ENCODE measurements at regions of chr20 and their contacts with region 1.

Region 1: DNA sequence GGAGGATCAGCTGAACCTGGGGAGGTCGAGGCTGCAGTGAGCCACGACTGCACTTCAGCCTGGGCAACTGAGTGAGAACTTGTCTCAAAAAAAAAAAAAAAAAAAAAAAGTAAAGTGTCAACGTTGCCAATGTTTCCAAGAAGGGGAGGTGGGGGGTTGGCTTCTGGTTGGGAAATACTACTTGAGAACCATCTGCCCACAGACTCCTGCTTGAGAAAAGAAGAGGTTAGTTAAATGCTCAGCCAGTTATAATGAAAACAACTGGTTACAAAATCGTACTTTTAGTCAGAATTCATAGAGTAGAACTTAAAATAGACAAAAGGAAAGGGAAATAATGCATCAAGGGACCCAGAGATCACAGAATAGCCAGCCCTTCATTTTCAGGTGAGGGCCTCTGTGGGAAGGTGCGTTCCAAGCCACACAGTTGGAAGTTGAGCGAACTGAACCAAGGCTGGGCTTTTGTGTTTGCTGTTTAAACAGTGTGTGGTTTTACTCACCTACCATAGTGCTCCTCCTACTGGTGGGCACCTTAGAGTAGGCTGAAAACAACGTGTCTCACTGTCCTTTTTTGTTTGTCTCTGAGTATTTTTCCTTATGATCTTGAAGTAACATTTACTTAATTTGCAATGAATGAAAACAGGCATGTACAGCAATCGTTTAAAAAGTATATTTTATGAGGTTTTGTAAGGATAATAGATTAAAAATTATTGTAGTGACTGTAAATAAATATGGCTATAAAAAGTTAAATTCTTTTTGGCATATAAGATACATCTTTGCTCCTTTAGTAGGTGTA is 200.7 kb downstream of the BCAS1 start:
- DNase-seq: peak; percentile 43 to 90 (median 74)
- ATAC-seq: peak; percentile 67
- H3K4me3 ChIP-seq: no peak overlapping the region
- H3K4me3 Mint-ChIP-seq: peak overlapping the region; percentile 33
- H3K27ac ChIP-seq: peak overlapping the region in 1 of 2 experiments; percentile 52
- H3K27ac Mint-ChIP-seq: peak overlapping the region; percentile 93
- H3K4me1 ChIP-seq: peaks cover 82% of the 10 kb centered on the region
- H3K4me1 Mint-ChIP-seq: peaks cover 75% of the 10 kb centered on the region
- H3K27me3 ChIP-seq: no peaks in the 10 kb centered on the region
- H3K27me3 Mint-ChIP-seq: no peaks in the 10 kb centered on the region
- CTCF ChIP-seq: peak; percentile 84

Region 2: DNA sequence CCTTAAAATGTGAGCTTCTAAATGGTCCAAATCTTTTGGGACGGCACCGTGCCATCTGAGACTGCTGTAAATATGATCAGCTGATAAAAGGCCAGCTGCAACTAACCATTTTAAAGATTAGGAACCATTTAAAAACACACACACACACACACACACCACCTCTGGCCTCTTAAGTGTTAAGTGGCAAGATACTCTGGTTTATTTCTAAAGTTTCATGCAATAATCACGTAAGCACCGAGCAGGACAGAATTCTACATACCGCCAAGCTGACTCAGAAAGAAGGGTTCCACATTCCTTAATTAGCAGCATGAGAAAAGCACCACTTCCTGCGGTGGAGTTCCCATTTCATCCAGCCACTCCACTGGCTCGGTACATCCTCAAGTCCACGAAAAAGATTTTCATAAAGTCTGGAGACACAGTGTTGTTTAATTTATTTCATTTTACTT is 258.2 kb before region 1 on chr20:
- CTCF ChIA-PET with region 1: interaction called, 7 read pairs
- POLR2A ChIA-PET with region 1: interaction called, 13 read pairs
- intact Hi-C with region 1: no loop called
- DNase-seq: peak in 2 of 9 experiments; percentile 7 to 41
- ATAC-seq: no peak
- H3K4me3 ChIP-seq: no peak overlapping the region
- H3K4me3 Mint-ChIP-seq: no peak overlapping the region
- H3K27ac ChIP-seq: no peak overlapping the region
- H3K27ac Mint-ChIP-seq: peak overlapping the region; percentile 62
- H3K4me1 ChIP-seq: peaks cover 21% of the 10 kb centered on the region
- H3K4me1 Mint-ChIP-seq: peaks cover 35% of the 10 kb centered on the region
- H3K27me3 ChIP-seq: no peaks in the 10 kb centered on the region
- H3K27me3 Mint-ChIP-seq: no peaks in the 10 kb centered on the region
- CTCF ChIP-seq: no peak

Region 3: GRCh38 chr20:53750827-53751619 is 118.6 kb before region 1 on chr20:
- CTCF ChIA-PET with region 1: interaction called, 13 read pairs
- POLR2A ChIA-PET with region 1: interaction called, 10 read pairs
- intact Hi-C with region 1: loop called in 1 of 2 experiments (anchors 5 kb)
- DNase-seq: peak in 8 of 9 experiments; percentile 6 to 79 (median 38)
- ATAC-seq: peak; percentile 56
- H3K4me3 ChIP-seq: no peak overlapping the region
- H3K4me3 Mint-ChIP-seq: peak overlapping the region; percentile 56
- H3K27ac ChIP-seq: peak overlapping the region; percentile 13 to 77
- H3K27ac Mint-ChIP-seq: peak overlapping the region; percentile 92
- H3K4me1 ChIP-seq: peaks cover 68% of the 10 kb centered on the region
- H3K4me1 Mint-ChIP-seq: peaks cover 70% of the 10 kb centered on the region
- H3K27me3 ChIP-seq: no peaks in the 10 kb centered on the region
- H3K27me3 Mint-ChIP-seq: no peaks in the 10 kb centered on the region
- CTCF ChIP-seq: no peak

Region 4: DNA sequence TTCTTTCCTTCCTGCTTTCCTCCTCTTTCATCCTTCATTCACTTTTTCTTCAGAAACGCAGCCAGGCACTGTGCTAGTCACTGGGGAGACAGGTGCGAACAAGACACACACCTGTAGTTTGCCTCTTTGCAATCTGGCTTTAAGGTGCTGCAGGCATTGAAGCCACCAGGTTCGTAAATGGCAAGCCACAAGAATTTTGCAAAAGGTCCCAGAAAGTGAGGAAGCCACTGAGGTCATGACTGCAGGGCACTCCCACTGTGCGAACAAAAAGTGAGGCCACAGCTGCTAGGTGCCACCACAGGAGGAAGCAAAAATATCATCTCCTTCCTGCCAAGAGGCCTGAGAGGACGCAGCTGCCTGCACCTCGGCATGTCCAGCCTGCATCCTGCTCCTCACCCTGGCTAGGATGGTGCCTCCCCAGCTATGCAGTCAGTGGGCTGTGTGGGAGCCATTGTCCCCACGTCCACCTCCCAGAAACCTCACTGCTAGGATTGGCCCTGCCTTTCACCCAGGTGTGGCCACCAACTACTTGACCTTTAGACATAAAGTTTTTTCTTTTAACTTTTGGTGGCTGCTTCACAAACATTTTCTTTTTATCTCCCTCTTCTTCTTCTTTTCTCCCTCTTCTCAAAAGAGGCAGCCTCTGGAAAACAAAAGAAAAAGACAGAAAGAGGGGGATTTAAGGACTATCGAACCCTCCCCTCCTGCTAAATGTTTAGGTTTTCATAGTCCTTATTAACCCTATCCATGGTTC is 30.1 kb before region 1 on chr20:
- CTCF ChIA-PET with region 1: interaction called, 10 read pairs
- POLR2A ChIA-PET with region 1: interaction called, 16 read pairs
- intact Hi-C with region 1: loop called (anchors 2 to 5 kb)
- DNase-seq: peak; percentile 52 to 92 (median 72)
- ATAC-seq: peak; percentile 57
- H3K4me3 ChIP-seq: no peak overlapping the region
- H3K4me3 Mint-ChIP-seq: peak overlapping the region; percentile 54
- H3K27ac ChIP-seq: peak overlapping the region; percentile 48 to 73
- H3K27ac Mint-ChIP-seq: peak overlapping the region; percentile 97
- H3K4me1 ChIP-seq: peaks cover 79% of the 10 kb centered on the region
- H3K4me1 Mint-ChIP-seq: peaks cover 81% of the 10 kb centered on the region
- H3K27me3 ChIP-seq: no peaks in the 10 kb centered on the region
- H3K27me3 Mint-ChIP-seq: no peaks in the 10 kb centered on the region
- CTCF ChIP-seq: no peak

Region 5: GRCh38 chr20:53891306-53891944 is 21.8 kb after region 1 on chr20:
- CTCF ChIA-PET with region 1: no interaction called
- POLR2A ChIA-PET with region 1: interaction called, 11 read pairs
- intact Hi-C with region 1: no loop called
- DNase-seq: no peak
- ATAC-seq: no peak
- H3K4me3 ChIP-seq: no peak overlapping the region
- H3K4me3 Mint-ChIP-seq: no peak overlapping the region
- H3K27ac ChIP-seq: no peak overlapping the region
- H3K27ac Mint-ChIP-seq: peak overlapping the region; percentile 4
- H3K4me1 ChIP-seq: peaks cover 38% of the 10 kb centered on the region
- H3K4me1 Mint-ChIP-seq: peaks cover 53% of the 10 kb centered on the region
- H3K27me3 ChIP-seq: no peaks in the 10 kb centered on the region
- H3K27me3 Mint-ChIP-seq: no peaks in the 10 kb centered on the region
- CTCF ChIP-seq: no peak

Region 6: GRCh38 chr20:54146671-54147070 is 277.0 kb after region 1 on chr20:
- CTCF ChIA-PET with region 1: no interaction called
- POLR2A ChIA-PET with region 1: no interaction called
- intact Hi-C with region 1: no loop called
- DNase-seq: no peak
- ATAC-seq: no peak
- H3K4me3 ChIP-seq: no peak overlapping the region
- H3K4me3 Mint-ChIP-seq: no peak overlapping the region
- H3K27ac ChIP-seq: no peak overlapping the region
- H3K27ac Mint-ChIP-seq: no peak overlapping the region
- H3K4me1 ChIP-seq: no peaks in the 10 kb centered on the region
- H3K4me1 Mint-ChIP-seq: no peaks in the 10 kb centered on the region
- H3K27me3 ChIP-seq: no peaks in the 10 kb centered on the region
- H3K27me3 Mint-ChIP-seq: peaks cover 18% of the 10 kb centered on the region
- CTCF ChIP-seq: no peak

Region 7: GRCh38 chr20:54649511-54649962 is 779.9 kb after region 1 on chr20:
- CTCF ChIA-PET with region 1: no interaction called
- POLR2A ChIA-PET with region 1: no interaction called
- intact Hi-C with region 1: no loop called
- DNase-seq: peak; percentile 22 to 61 (median 50)
- ATAC-seq: no peak
- H3K4me3 ChIP-seq: no peak overlapping the region
- H3K4me3 Mint-ChIP-seq: no peak overlapping the region
- H3K27ac ChIP-seq: no peak overlapping the region
- H3K27ac Mint-ChIP-seq: no peak overlapping the region
- H3K4me1 ChIP-seq: no peaks in the 10 kb centered on the region
- H3K4me1 Mint-ChIP-seq: no peaks in the 10 kb centered on the region
- H3K27me3 ChIP-seq: no peaks in the 10 kb centered on the region
- H3K27me3 Mint-ChIP-seq: peaks cover 9% of the 10 kb centered on the region
- CTCF ChIP-seq: peak; percentile 60

Measured in CD8-positive, alpha-beta T cell (primary cell).